MCF 10A (cell line): ENCODE measurements at regions of chr1 and their contacts with region 1.

Region 1: GRCh38 chr1:107750358-107750959 is 214.5 kb downstream of the VAV3 start:
- DNase-seq: peak; percentile 87
- H3K4me3 Mint-ChIP-seq: no peak overlapping the region
- H3K27ac Mint-ChIP-seq: no peak overlapping the region
- H3K4me1 Mint-ChIP-seq: no peaks in the 10 kb centered on the region
- H3K27me3 Mint-ChIP-seq: no peaks in the 10 kb centered on the region
- CTCF ChIP-seq: peak; percentile 77

Region 2: GRCh38 chr1:107142140-107142542 is 608.3 kb before region 1 on chr1:
- CTCF ChIA-PET with region 1: interaction called, 3 read pairs
- POLR2A ChIA-PET with region 1: no interaction called
- intact Hi-C with region 1: loop called (anchors 5 kb)
- DNase-seq: peak; percentile 55
- H3K4me3 Mint-ChIP-seq: peak overlapping the region; percentile 76
- H3K27ac Mint-ChIP-seq: no peak overlapping the region
- H3K4me1 Mint-ChIP-seq: peaks cover 26% of the 10 kb centered on the region
- H3K27me3 Mint-ChIP-seq: no peaks in the 10 kb centered on the region
- CTCF ChIP-seq: peak; percentile 47

Region 3: GRCh38 chr1:107430540-107431228 is 319.8 kb before region 1 on chr1:
- CTCF ChIA-PET with region 1: interaction called, 60 read pairs
- POLR2A ChIA-PET with region 1: no interaction called
- intact Hi-C with region 1: loop called (anchors 1 kb)
- DNase-seq: peak; percentile 70
- H3K4me3 Mint-ChIP-seq: no peak overlapping the region
- H3K27ac Mint-ChIP-seq: no peak overlapping the region
- H3K4me1 Mint-ChIP-seq: peaks cover 6% of the 10 kb centered on the region
- H3K27me3 Mint-ChIP-seq: no peaks in the 10 kb centered on the region
- CTCF ChIP-seq: peak; percentile 73

Region 4: GRCh38 chr1:107572653-107573211 is 177.7 kb before region 1 on chr1:
- CTCF ChIA-PET with region 1: interaction called, 5 read pairs
- POLR2A ChIA-PET with region 1: no interaction called
- intact Hi-C with region 1: loop called (anchors 2 kb)
- DNase-seq: peak; percentile 95
- H3K4me3 Mint-ChIP-seq: no peak overlapping the region
- H3K27ac Mint-ChIP-seq: peak overlapping the region; percentile 75
- H3K4me1 Mint-ChIP-seq: peaks cover 26% of the 10 kb centered on the region
- H3K27me3 Mint-ChIP-seq: no peaks in the 10 kb centered on the region
- CTCF ChIP-seq: no peak

Region 5: DNA sequence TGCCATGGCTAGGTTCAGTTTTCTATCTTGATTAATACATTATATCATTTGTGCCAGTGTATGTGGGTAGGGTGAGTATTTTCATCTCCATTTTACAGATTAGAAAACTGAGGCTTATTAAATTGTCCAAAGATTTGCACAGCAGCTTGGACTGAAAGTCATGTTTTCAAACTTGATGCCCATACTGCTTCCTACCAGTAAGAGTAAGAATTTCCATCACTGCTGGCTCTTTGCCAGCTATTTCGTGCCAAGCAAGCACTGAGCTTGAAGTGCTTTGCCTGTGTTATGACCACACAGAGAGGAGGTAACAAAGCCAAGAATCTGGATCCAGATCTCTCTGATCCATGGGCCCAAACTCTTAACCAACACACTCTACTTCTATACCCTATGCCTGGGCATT is 80.5 kb before region 1 on chr1:
- CTCF ChIA-PET with region 1: interaction called, 12 read pairs
- POLR2A ChIA-PET with region 1: interaction called, 3 read pairs
- intact Hi-C with region 1: no loop called
- DNase-seq: peak; percentile 86
- H3K4me3 Mint-ChIP-seq: no peak overlapping the region
- H3K27ac Mint-ChIP-seq: no peak overlapping the region
- H3K4me1 Mint-ChIP-seq: peaks cover 18% of the 10 kb centered on the region
- H3K27me3 Mint-ChIP-seq: no peaks in the 10 kb centered on the region
- CTCF ChIP-seq: no peak

Region 6: GRCh38 chr1:107688354-107688753 is 62.1 kb before region 1 on chr1:
- CTCF ChIA-PET with region 1: interaction called, 12 read pairs
- POLR2A ChIA-PET with region 1: interaction called, 25 read pairs
- intact Hi-C with region 1: no loop called
- DNase-seq: peak; percentile 94
- H3K4me3 Mint-ChIP-seq: peak overlapping the region; percentile 79
- H3K27ac Mint-ChIP-seq: peak overlapping the region; percentile 90
- H3K4me1 Mint-ChIP-seq: peaks cover 42% of the 10 kb centered on the region
- H3K27me3 Mint-ChIP-seq: no peaks in the 10 kb centered on the region
- CTCF ChIP-seq: no peak

Region 7: DNA sequence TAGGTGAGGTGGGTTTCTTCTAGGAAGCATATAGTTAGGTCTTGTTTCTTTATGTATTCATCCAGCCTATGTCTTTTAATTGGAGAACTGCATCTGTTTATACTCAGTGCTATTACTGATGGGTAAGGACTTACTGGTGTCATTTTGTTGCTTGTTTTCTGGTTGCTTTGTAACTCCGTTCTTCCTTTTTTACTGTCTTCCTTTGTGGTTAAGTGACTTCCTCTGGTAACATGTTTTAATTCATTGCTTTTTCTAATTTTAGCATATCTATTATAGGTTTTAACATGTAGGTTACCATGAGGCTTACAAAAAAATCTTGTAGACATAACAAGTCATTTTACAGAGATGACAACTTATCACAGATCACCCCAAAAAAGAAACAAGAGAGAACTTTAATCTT is 53.7 kb after region 1 on chr1:
- CTCF ChIA-PET with region 1: no interaction called
- POLR2A ChIA-PET with region 1: no interaction called
- intact Hi-C with region 1: no loop called
- DNase-seq: no peak
- H3K4me3 Mint-ChIP-seq: no peak overlapping the region
- H3K27ac Mint-ChIP-seq: no peak overlapping the region
- H3K4me1 Mint-ChIP-seq: no peaks in the 10 kb centered on the region
- H3K27me3 Mint-ChIP-seq: no peaks in the 10 kb centered on the region
- CTCF ChIP-seq: no peak